AG04449 (cell line): ENCODE measurements at regions of chr7 and their contacts with region 1.

Region 1: DNA sequence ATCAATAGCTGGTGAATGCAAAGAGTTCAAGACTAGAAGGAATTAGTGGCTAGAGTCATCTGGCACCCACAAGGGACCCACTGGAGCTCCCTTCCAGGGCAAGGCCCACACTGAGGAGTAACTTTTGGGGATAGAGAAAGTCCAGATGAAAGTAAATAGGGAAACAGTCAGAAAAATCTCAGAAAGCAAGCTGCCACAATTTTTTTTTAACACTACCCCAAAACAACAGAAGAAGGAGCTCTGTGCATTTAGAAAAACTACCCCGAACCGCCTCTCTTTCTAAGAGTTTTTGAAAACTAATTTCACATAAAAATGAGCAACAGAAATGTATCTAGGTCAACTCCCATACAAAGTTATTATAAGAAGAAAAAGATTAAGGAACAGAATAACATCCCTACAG is 42.2 kb downstream of the AOAH start:
- DNase-seq: no peak
- H3K4me3 ChIP-seq: no peak overlapping the region
- CTCF ChIP-seq: no peak

Region 2: DNA sequence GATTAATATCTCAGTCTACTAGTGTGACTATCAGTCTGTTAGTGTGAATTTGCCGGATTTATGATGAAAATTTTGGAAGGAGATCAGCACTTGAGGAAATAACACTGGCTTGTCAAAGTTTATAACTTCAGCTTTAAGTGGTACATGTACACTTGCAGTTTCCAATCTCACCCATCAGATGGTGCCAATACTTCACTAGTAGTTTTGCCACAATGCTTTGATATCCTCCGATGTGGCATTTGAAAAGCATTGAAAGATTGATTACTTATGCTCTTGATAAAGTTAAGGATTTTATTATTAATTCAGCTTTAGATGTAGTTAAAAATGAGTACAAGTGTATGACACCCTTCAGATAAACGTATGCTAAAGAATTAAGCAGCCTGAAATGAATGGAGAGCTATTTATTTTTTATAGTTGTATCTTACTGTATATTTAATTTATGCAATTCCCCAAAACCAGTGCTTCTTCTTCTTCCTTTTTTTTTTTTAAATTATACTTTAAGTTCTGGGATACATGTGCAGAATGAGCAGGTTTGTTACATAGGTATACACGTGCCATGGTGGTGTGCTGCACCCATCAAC is 194.3 kb before region 1 on chr7:
- CTCF ChIA-PET with region 1: interaction called, 12 read pairs
- POLR2A ChIA-PET with region 1: no interaction called
- DNase-seq: no peak
- H3K4me3 ChIP-seq: no peak overlapping the region
- CTCF ChIP-seq: peak; percentile 64

Region 3: DNA sequence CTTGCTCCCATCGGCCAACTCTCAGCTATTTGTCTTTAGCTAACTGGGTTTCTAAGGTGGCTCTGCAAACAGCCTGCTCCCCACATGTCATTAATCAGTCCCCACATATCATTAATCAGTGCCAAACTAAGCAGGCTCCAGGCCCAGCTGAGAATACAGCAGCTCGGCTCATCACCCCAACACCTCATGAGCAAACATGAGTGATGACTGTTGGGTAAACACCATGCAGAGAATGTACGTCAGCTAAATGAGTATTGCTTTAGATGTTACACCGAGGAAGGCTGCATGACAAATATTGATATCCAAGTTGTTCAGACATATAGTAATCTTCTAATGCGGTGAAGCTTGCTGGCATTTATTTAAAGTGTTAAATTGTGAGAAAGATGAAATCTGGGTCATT is 229.7 kb after region 1 on chr7:
- CTCF ChIA-PET with region 1: no interaction called
- POLR2A ChIA-PET with region 1: no interaction called
- DNase-seq: no peak
- H3K4me3 ChIP-seq: no peak overlapping the region
- CTCF ChIP-seq: no peak